Activated B cell treated with CpG ODN at 0.5 μM for 24 hours (primary cell): ENCODE measurements at regions of chr9 and their contacts with region 1.

Region 1: GRCh38 chr9:5628530-5629311 is at the start of gene RIC1:
- DNase-seq: peak; percentile 88
- ATAC-seq: peak; percentile 75
- H3K4me3 Mint-ChIP-seq: peak within 1 kb of the TSS; percentile 100
- H3K27ac Mint-ChIP-seq: peak within 1 kb of the TSS; percentile 100
- H3K4me1 Mint-ChIP-seq: peaks cover 78% of the 10 kb centered on the region
- H3K27me3 Mint-ChIP-seq: no peaks in the 10 kb centered on the region
- CTCF ChIP-seq: no peak
- total RNA-seq, gene RIC1: 68.1 and 85.0 TPM in 2 replicates

Region 2: GRCh38 chr9:4679268-4680172 is 949.2 kb before region 1 on chr9 and contains the start of gene CDC37L1:
- CTCF ChIA-PET with region 1: no interaction called
- POLR2A ChIA-PET with region 1: interaction called, 6 read pairs
- intact Hi-C with region 1: loop called (anchors 1 kb)
- DNase-seq: peak; percentile 100
- ATAC-seq: peak; percentile 95
- H3K4me3 Mint-ChIP-seq: no peak within 1 kb of the TSS
- H3K27ac Mint-ChIP-seq: no peak within 1 kb of the TSS
- H3K4me1 Mint-ChIP-seq: peaks cover 7% of the 10 kb centered on the region
- H3K27me3 Mint-ChIP-seq: no peaks in the 10 kb centered on the region
- CTCF ChIP-seq: no peak
- total RNA-seq, gene CDC37L1: 12.3 and 14.7 TPM in 2 replicates

Region 3: DNA sequence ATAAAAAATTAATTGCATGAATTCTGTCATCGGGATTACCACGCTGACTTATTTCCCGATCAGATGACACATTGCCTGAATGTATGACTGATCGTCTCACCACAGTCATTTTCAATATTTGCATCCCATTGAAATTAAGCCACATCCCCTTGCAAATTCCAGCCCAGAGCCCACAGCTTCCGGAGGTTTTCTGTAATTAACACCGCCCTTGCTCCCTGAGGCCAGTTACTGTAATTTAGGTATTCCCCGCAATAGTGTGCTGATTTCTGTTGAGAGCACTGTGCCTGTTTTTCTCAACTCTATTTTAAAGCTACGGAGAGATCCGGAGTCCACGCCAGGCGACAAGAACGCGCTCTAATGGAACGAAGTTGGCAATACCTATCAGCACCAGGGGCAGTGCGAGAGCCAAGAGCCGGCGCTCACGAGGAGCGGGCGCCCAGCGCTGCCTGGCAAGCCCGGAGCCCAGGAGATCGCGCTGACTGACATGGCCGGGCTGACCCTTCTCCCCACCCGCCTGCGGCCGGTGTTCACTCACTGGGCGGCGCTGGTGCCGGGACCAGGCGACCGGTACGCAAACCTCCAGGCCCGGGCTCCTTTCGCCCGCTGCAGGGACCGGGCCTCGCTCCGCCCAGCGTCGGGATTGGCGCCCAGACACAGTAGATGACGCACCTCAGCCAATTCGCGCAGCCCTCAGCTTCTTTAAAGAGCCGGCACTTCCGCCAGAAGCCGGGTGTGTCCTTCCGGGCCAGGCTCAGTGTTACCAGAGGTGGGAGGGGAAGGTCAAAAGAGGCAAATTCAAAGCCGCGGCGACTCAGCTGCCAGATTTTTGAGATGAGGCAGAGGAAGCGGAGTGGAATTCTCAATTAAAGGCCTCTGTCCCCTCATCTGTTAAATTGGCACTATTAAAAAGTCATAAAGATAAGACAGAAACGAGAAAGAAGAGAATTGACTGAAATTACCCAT is 191.2 kb before region 1 on chr9 and contains the start of gene PLGRKT:
- CTCF ChIA-PET with region 1: interaction called, 5 read pairs
- POLR2A ChIA-PET with region 1: interaction called, 131 read pairs
- intact Hi-C with region 1: loop called (anchors 1 kb)
- DNase-seq: peak; percentile 82
- ATAC-seq: peak; percentile 78
- H3K4me3 Mint-ChIP-seq: peak within 1 kb of the TSS; percentile 96
- H3K27ac Mint-ChIP-seq: peak within 1 kb of the TSS; percentile 100
- H3K4me1 Mint-ChIP-seq: peaks cover 59% of the 10 kb centered on the region
- H3K27me3 Mint-ChIP-seq: no peaks in the 10 kb centered on the region
- CTCF ChIP-seq: no peak
- total RNA-seq, gene PLGRKT: 57.1 and 59.7 TPM in 2 replicates

Region 4: DNA sequence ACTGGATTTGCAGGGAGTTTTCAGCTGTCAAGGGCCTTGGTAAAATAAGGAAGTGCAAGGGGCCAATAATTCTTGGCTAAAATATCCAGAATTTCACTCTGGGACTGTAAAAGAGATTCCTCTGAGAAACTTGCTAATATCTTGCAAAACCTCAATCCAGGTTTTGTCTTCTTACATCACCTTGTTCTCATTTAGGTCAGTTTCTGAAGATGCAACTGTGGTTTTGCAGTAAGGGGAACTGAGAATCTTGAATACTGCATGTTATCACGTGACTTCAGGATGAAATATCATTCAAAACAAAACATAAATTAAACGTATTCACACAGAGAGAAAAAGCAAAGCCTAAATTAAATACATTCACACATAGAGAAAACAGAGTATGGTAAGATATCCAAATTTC is 34.8 kb before region 1 on chr9:
- CTCF ChIA-PET with region 1: interaction called, 6 read pairs
- POLR2A ChIA-PET with region 1: interaction called, 104 read pairs
- intact Hi-C with region 1: loop called (anchors 1 kb)
- DNase-seq: no peak
- ATAC-seq: peak; percentile 32
- H3K4me3 Mint-ChIP-seq: peak overlapping the region; percentile 70
- H3K27ac Mint-ChIP-seq: peak overlapping the region; percentile 98
- H3K4me1 Mint-ChIP-seq: peaks cover 94% of the 10 kb centered on the region
- H3K27me3 Mint-ChIP-seq: no peaks in the 10 kb centered on the region
- CTCF ChIP-seq: no peak

Region 5: DNA sequence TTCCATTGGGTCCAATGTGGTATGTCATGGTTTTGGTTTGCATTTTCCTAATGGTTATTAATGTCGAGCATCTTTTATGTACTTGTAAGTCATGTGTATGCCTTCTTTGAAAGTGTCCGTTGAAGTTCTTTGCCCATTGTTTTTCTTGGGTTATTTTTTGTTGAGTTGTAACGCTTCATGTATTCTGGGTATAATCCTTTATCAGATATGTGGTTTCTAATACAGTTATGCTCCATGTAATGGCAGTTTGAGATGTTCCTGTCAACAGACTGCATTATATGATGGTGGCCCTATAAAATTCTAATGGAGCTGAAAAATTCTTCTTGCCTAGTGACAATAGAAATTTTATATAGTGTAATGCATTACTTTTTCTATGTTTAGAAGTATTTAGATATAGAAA is 17.4 kb after region 1 on chr9:
- CTCF ChIA-PET with region 1: no interaction called
- POLR2A ChIA-PET with region 1: interaction called, 5 read pairs
- intact Hi-C with region 1: loop called (anchors 2 kb)
- DNase-seq: no peak
- ATAC-seq: no peak
- H3K4me3 Mint-ChIP-seq: no peak overlapping the region
- H3K27ac Mint-ChIP-seq: no peak overlapping the region
- H3K4me1 Mint-ChIP-seq: peaks cover 56% of the 10 kb centered on the region
- H3K27me3 Mint-ChIP-seq: no peaks in the 10 kb centered on the region
- CTCF ChIP-seq: no peak

Region 6: GRCh38 chr9:5773324-5773999 is 144.7 kb after region 1 on chr9:
- CTCF ChIA-PET with region 1: no interaction called
- POLR2A ChIA-PET with region 1: no interaction called
- intact Hi-C with region 1: no loop called
- DNase-seq: no peak
- ATAC-seq: no peak
- H3K4me3 Mint-ChIP-seq: no peak overlapping the region
- H3K27ac Mint-ChIP-seq: no peak overlapping the region
- H3K4me1 Mint-ChIP-seq: no peaks in the 10 kb centered on the region
- H3K27me3 Mint-ChIP-seq: no peaks in the 10 kb centered on the region
- CTCF ChIP-seq: no peak

Region 7: GRCh38 chr9:5832543-5833529 is 204.1 kb after region 1 on chr9 and contains the start of gene ERMP1:
- CTCF ChIA-PET with region 1: no interaction called
- POLR2A ChIA-PET with region 1: interaction called, 8 read pairs
- intact Hi-C with region 1: loop called (anchors 2 kb)
- DNase-seq: peak; percentile 88
- ATAC-seq: peak; percentile 88
- H3K4me3 Mint-ChIP-seq: peak within 1 kb of the TSS; percentile 90
- H3K27ac Mint-ChIP-seq: peak within 1 kb of the TSS; percentile 83
- H3K4me1 Mint-ChIP-seq: peaks cover 33% of the 10 kb centered on the region
- H3K27me3 Mint-ChIP-seq: no peaks in the 10 kb centered on the region
- CTCF ChIP-seq: peak; percentile 22
- total RNA-seq, gene ERMP1: 7.3 and 7.5 TPM in 2 replicates

Region 8: GRCh38 chr9:6681147-6681956 is 1052.6 kb after region 1 on chr9:
- CTCF ChIA-PET with region 1: no interaction called
- POLR2A ChIA-PET with region 1: interaction called, 4 read pairs
- intact Hi-C with region 1: loop called (anchors 5 kb)
- DNase-seq: peak; percentile 85
- ATAC-seq: peak; percentile 74
- H3K4me3 Mint-ChIP-seq: peak overlapping the region; percentile 97
- H3K27ac Mint-ChIP-seq: peak overlapping the region; percentile 100
- H3K4me1 Mint-ChIP-seq: peaks cover 44% of the 10 kb centered on the region
- H3K27me3 Mint-ChIP-seq: no peaks in the 10 kb centered on the region
- CTCF ChIP-seq: no peak